CD4-positive, alpha-beta T cell (primary cell): ENCODE measurements at regions of chr12 and their contacts with region 1.

Region 1: DNA sequence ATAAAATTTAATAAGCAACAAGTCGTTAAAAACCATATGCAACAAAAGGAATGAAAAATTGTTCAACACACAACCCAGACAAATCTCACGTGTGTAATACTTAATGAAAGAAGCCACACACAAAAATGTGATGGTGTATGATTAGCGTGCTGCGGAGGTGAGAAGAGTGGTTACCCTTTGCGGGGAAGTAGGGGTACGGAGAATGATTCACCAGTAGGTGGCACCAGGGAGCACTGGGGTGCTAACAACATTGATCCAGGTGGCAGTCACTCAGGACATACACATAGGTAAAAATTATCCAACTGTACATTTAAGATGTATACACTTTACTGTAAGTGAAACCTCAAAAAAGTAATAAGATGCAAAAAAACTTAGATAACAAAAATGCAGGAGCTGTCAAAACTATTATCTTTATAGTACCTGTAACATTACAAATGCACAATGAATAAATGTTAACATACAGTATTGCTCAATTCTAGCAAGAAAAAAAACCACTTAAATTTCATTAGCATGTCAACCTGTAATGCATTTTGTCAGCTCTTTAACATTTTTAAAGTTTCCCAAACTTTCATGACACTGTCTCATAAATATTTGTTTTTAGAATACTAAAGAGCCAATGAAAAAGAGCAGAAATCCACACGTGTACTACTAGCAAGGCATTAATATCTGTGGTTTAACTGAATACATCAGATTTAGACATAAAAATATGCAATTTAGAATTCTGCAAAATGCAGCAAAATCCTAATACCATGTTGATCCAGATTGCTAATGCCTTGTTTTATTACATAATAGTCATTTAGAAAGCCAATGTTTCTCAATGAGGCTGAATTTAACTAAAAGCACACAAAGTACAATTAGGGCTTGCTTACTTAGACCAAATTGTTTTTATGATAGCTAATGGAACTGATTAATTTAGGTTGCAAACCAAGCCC is 46.7 kb downstream of the TMCC3 start:
- DNase-seq: peak; percentile 26 to 74 (median 40)
- ATAC-seq: no peak
- H3K4me3 ChIP-seq: no peak overlapping the region
- H3K4me3 Mint-ChIP-seq: no peak overlapping the region
- H3K27ac ChIP-seq: no peak overlapping the region
- H3K27ac Mint-ChIP-seq: no peak overlapping the region
- H3K4me1 ChIP-seq: no peaks in the 10 kb centered on the region
- H3K4me1 Mint-ChIP-seq: no peaks in the 10 kb centered on the region
- H3K27me3 ChIP-seq: peaks cover 0 to 5% of the 10 kb centered on the region in 2 experiments
- H3K27me3 Mint-ChIP-seq: peaks cover 5% of the 10 kb centered on the region
- CTCF ChIP-seq: peak; percentile 66

Region 2: DNA sequence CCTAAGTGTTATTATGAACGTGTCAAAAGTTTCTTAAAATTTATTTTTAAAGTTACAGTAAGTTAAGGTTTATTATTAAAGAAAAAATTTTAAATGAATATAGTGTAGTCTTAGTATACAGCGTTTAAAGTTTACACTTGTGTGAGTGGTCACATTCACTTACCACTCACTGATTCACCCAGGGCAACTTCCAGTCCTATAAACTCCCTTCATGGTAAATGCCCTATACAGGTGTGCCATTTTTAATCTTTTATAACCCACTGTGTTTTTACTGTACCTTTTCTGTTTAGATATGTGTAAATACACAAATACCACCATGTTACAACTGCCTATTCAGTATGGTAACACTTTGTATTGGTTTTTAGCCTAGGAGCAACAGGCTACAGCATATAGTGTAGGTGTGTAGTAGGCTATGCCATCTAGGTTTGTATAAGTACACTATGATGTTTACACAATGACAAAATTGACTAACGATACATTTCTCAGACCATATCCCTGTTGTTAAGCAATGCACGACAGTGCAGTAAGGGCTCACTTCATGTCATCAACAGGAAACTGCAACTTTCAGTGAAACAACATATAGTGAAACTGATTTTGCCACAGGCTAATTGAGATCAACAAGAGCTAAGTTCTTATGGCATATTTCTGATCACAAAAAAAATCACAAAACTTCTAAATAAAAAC is 158.7 kb after region 1 on chr12:
- CTCF ChIA-PET with region 1: no interaction called
- POLR2A ChIA-PET with region 1: no interaction called
- intact Hi-C with region 1: loop called in 1 of 2 experiments (anchors 5 kb)
- DNase-seq: peak in 1 of 14 experiments; percentile 6
- ATAC-seq: no peak
- H3K4me3 ChIP-seq: no peak overlapping the region
- H3K4me3 Mint-ChIP-seq: no peak overlapping the region
- H3K27ac ChIP-seq: no peak overlapping the region
- H3K27ac Mint-ChIP-seq: no peak overlapping the region
- H3K4me1 ChIP-seq: no peaks in the 10 kb centered on the region
- H3K4me1 Mint-ChIP-seq: no peaks in the 10 kb centered on the region
- H3K27me3 ChIP-seq: no peaks in the 10 kb centered on the region
- H3K27me3 Mint-ChIP-seq: peaks cover 13% of the 10 kb centered on the region
- CTCF ChIP-seq: no peak

Region 3: DNA sequence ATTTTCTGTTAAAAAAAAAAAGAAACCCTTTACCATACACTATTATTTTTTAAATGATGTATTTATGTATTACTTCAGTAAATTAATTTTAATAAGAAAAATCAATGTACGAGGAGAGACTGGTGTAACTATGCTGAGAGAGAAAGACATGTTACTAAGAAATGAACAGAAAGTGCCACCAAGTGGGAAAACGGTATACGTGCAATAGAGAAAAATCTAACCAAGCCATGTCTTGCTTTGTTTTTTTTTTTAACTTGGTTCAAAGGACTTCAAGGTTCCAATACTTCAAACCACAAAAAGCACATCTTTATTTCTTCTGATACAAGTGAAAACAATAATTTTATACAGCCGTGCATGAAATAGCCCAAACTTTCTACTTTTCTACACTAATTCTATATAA is 376.9 kb after region 1 on chr12:
- CTCF ChIA-PET with region 1: no interaction called
- POLR2A ChIA-PET with region 1: no interaction called
- intact Hi-C with region 1: loop called in 1 of 2 experiments (anchors 2 kb)
- DNase-seq: peak in 3 of 14 experiments; percentile 35 to 65 (median 61)
- ATAC-seq: peak; percentile 87
- H3K4me3 ChIP-seq: no peak overlapping the region
- H3K4me3 Mint-ChIP-seq: peak overlapping the region; percentile 49
- H3K27ac ChIP-seq: no peak overlapping the region
- H3K27ac Mint-ChIP-seq: peak overlapping the region; percentile 84
- H3K4me1 ChIP-seq: peaks cover 44% of the 10 kb centered on the region
- H3K4me1 Mint-ChIP-seq: peaks cover 62% of the 10 kb centered on the region
- H3K27me3 ChIP-seq: no peaks in the 10 kb centered on the region
- H3K27me3 Mint-ChIP-seq: no peaks in the 10 kb centered on the region
- CTCF ChIP-seq: peak; percentile 50

Region 4: GRCh38 chr12:95532851-95533250 is 929.2 kb after region 1 on chr12:
- CTCF ChIA-PET with region 1: no interaction called
- POLR2A ChIA-PET with region 1: no interaction called
- intact Hi-C with region 1: loop called (anchors 5 to 10 kb)
- DNase-seq: no peak
- ATAC-seq: no peak
- H3K4me3 ChIP-seq: no peak overlapping the region
- H3K4me3 Mint-ChIP-seq: no peak overlapping the region
- H3K27ac ChIP-seq: no peak overlapping the region
- H3K27ac Mint-ChIP-seq: no peak overlapping the region
- H3K4me1 ChIP-seq: no peaks in the 10 kb centered on the region
- H3K4me1 Mint-ChIP-seq: peaks cover 5% of the 10 kb centered on the region
- H3K27me3 ChIP-seq: no peaks in the 10 kb centered on the region
- H3K27me3 Mint-ChIP-seq: no peaks in the 10 kb centered on the region
- CTCF ChIP-seq: no peak